CD4-positive, alpha-beta memory T cell (primary cell): ENCODE measurements at regions of chr11 and their contacts with region 1.

Region 1: GRCh38 chr11:76919887-76920746 is 59.4 kb downstream of the ACER3 start:
- DNase-seq: peak; percentile 66 to 73 (median 69)
- H3K4me3 ChIP-seq: peak overlapping the region in 1 of 2 donors; percentile 29
- H3K4me3 Mint-ChIP-seq: peak overlapping the region; percentile 66 to 80 (median 74)
- H3K27ac ChIP-seq: no peak overlapping the region
- H3K27ac Mint-ChIP-seq: no peak overlapping the region
- H3K4me1 ChIP-seq: peaks cover 10% of the 10 kb centered on the region
- H3K4me1 Mint-ChIP-seq: peaks cover 3 to 12% (median 7%) of the 10 kb centered on the region in 4 donors
- H3K27me3 ChIP-seq: no peaks in the 10 kb centered on the region
- H3K27me3 Mint-ChIP-seq: no peaks in the 10 kb centered on the region

Region 2: GRCh38 chr11:76721755-76722677 is 198.1 kb before region 1 on chr11:
- CTCF ChIA-PET with region 1: interaction called, 15 read pairs
- POLR2A ChIA-PET with region 1: no interaction called
- intact Hi-C with region 1: no loop called
- DNase-seq: peak; percentile 43 to 57 (median 55)
- H3K4me3 ChIP-seq: no peak overlapping the region
- H3K4me3 Mint-ChIP-seq: peak overlapping the region in 7 of 8 donors; percentile 26 to 65 (median 49)
- H3K27ac ChIP-seq: no peak overlapping the region
- H3K27ac Mint-ChIP-seq: no peak overlapping the region
- H3K4me1 ChIP-seq: no peaks in the 10 kb centered on the region
- H3K4me1 Mint-ChIP-seq: peaks cover 5 to 10% (median 6%) of the 10 kb centered on the region in 4 donors
- H3K27me3 ChIP-seq: no peaks in the 10 kb centered on the region
- H3K27me3 Mint-ChIP-seq: peaks cover 6 to 13% of the 10 kb centered on the region in 2 donors

Region 3: GRCh38 chr11:76734456-76735420 is 185.4 kb before region 1 on chr11:
- CTCF ChIA-PET with region 1: interaction called, 34 read pairs
- POLR2A ChIA-PET with region 1: no interaction called
- intact Hi-C with region 1: no loop called
- DNase-seq: no peak
- H3K4me3 ChIP-seq: no peak overlapping the region
- H3K4me3 Mint-ChIP-seq: no peak overlapping the region
- H3K27ac ChIP-seq: no peak overlapping the region
- H3K27ac Mint-ChIP-seq: no peak overlapping the region
- H3K4me1 ChIP-seq: no peaks in the 10 kb centered on the region
- H3K4me1 Mint-ChIP-seq: no peaks in the 10 kb centered on the region
- H3K27me3 ChIP-seq: no peaks in the 10 kb centered on the region
- H3K27me3 Mint-ChIP-seq: peaks cover 3 to 5% of the 10 kb centered on the region in 2 donors

Region 4: GRCh38 chr11:76807206-76807875 is 112.8 kb before region 1 on chr11:
- CTCF ChIA-PET with region 1: interaction called, 40 read pairs
- POLR2A ChIA-PET with region 1: no interaction called
- intact Hi-C with region 1: loop called (anchors 1 kb)
- DNase-seq: peak; percentile 25 to 57 (median 45)
- H3K4me3 ChIP-seq: no peak overlapping the region
- H3K4me3 Mint-ChIP-seq: peak overlapping the region in 1 of 8 donors; percentile 48
- H3K27ac ChIP-seq: no peak overlapping the region
- H3K27ac Mint-ChIP-seq: no peak overlapping the region
- H3K4me1 ChIP-seq: peaks cover 5% of the 10 kb centered on the region
- H3K4me1 Mint-ChIP-seq: peaks cover 4 to 21% (median 10%) of the 10 kb centered on the region in 4 donors
- H3K27me3 ChIP-seq: no peaks in the 10 kb centered on the region
- H3K27me3 Mint-ChIP-seq: peaks cover 6 to 23% of the 10 kb centered on the region in 2 donors

Region 5: DNA sequence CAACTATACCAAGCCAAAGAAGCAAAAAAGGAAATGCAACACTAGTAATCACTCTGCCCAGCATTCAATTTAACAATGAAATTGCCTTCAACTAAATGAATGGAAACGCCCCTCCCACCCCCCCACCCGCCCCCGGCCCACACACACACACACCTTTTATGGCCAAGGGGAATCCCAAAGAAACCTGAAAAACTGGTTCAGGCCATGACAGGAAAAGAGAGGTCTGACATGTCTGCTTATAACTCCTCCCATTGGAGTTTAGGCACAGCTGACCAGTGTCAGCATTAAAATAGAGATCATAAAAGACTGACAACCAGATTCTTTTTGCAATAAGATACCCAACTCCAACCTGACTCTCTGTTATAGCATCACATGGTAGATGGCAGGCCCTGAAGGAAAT is 16.8 kb before region 1 on chr11:
- CTCF ChIA-PET with region 1: interaction called, 53 read pairs
- POLR2A ChIA-PET with region 1: no interaction called
- intact Hi-C with region 1: no loop called
- DNase-seq: no peak
- H3K4me3 ChIP-seq: no peak overlapping the region
- H3K4me3 Mint-ChIP-seq: no peak overlapping the region
- H3K27ac ChIP-seq: no peak overlapping the region
- H3K27ac Mint-ChIP-seq: no peak overlapping the region
- H3K4me1 ChIP-seq: no peaks in the 10 kb centered on the region
- H3K4me1 Mint-ChIP-seq: peaks cover 0 to 2% (median 0%) of the 10 kb centered on the region in 4 donors
- H3K27me3 ChIP-seq: no peaks in the 10 kb centered on the region
- H3K27me3 Mint-ChIP-seq: no peaks in the 10 kb centered on the region